Motor neuron (in vitro differentiated cells): ENCODE measurements at regions of chr14 and their contacts with region 1.

Region 1: DNA sequence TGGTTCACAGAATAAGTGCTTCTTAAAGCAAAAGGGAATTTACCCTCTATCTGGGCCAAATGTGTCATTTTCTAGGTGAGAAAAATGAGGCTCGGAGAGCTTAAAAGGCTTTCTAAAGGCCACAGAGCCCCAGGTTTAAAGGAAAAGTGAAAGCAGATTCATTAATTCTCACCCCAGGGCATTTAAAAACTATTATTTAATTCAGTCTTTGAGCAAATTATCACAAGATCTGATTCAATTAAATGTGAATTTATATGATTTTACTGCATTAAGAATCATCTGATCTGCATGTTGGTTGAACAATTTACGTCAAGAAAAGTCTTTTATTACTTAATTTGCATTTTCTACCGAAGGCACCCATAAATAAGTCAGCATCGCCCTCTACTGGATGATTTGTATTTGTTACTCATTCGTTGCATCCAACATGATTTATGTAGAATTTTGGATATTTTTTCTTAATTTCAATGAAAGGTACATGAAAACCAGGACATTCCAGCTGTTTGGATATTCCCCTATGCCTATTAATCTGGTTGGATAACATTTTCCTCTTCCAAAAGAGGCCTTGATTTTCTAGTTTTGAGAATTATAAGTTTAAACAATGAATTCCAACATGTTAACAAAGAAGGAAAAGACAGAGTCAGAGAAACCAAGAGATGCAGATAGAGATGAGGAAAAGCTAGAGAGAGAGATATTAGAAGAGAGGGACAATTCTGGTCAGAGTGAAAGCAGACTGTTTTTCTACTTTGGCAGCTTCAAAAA is 19.1 kb upstream of the DHRS7 start:
- ATAC-seq: peak in 5 of 8 experiments; percentile 12 to 47 (median 22)
- H3K4me3 ChIP-seq: peak overlapping the region in 2 of 5 donors; percentile 6 to 12
- H3K27ac ChIP-seq: no peak overlapping the region
- H3K4me1 ChIP-seq: peaks cover 0 to 8% of the 10 kb centered on the region in 2 donors

Region 2: DNA sequence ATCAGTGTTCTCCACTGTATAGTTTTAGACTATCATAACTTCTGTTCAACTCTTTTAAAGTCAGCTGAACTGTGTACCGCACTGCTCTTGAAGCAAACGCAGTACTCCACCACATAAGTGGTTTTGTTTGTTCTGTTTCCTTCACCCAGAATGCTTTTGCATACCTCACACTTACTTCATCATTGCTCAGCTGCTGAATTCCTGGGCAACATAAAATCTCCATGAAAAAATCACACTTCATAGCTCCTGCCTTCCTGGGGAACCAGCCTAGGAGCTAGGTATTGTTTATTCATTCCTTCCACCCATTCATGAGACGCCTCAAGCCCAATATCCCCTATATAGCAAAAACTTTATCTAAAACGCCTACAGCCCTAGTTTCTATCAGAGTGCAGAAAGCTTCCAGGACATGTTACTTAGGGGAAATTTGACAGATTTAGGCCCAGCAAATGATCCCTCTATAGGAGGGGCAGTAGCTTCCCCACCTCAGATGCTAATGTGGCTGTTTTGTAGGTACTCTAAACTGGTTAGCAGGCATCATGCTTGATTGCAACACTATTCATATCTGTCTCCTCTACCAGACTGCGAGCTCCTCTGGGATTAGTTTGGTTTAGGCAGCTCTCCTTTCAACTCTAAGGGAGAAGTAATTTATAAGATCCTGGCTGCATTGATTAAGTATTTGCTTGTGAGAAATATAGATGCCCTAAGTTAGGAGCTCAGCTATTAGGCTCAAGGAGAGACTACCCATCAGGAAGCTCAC is 219.9 kb before region 1 on chr14:
- in situ Hi-C with region 1: loop called in 2 of 9 experiments (anchors 25 kb)
- ATAC-seq: peak in 7 of 8 experiments; percentile 10 to 93 (median 31)
- H3K4me3 ChIP-seq: no peak overlapping the region
- H3K27ac ChIP-seq: no peak overlapping the region
- H3K4me1 ChIP-seq: no peaks in the 10 kb centered on the region

Region 3: GRCh38 chr14:60064491-60065072 is 119.7 kb before region 1 on chr14:
- in situ Hi-C with region 1: no loop called
- ATAC-seq: peak in 3 of 8 experiments; percentile 51 to 56 (median 54)
- H3K4me3 ChIP-seq: no peak overlapping the region
- H3K27ac ChIP-seq: no peak overlapping the region
- H3K4me1 ChIP-seq: peaks cover 0 to 4% of the 10 kb centered on the region in 2 donors

Region 4: DNA sequence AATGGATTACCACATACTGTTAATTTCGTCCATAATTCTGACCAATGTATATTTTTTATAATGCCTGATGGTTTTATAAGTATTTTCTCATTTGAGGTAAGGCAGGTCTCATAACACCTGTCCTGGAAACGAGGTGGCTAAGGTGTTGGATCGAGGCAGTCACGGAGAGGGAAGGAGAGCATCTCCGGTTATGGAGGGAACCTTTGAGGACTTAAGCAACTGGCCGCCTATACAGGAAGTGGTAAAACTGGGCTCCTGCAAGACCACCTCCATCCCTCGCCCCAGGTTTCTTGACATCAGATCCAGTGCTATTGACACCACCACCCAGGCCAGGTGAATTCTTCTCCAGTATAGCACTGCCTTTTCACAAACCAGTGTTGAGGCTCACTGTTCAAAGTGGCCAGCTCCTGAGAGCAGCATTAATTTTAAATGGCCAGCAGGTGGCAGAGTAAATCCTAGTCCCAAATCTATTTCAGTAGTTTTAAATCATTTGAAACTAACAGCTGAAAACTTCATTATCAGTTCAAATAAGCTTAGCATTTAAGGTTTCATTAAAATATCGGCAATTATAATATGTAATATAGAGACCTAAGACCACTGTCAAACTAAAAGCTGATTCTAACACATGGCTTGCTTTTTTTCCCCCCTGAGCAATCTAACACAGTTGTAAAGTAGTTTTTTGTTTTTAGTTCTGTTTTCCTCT is 165.5 kb after region 1 on chr14:
- in situ Hi-C with region 1: no loop called
- ATAC-seq: peak in 5 of 8 experiments; percentile 33 to 76 (median 68)
- H3K4me3 ChIP-seq: no peak overlapping the region
- H3K27ac ChIP-seq: no peak overlapping the region
- H3K4me1 ChIP-seq: no peaks in the 10 kb centered on the region